K562 (cell line): ENCODE measurements at regions of chr2 and their contacts with region 1.

Region 1: GRCh38 chr2:64586883-64587481 is 62.9 kb downstream of the AFTPH start:
- DNase-seq: peak; percentile 23 to 52 (median 37)
- ATAC-seq: peak; percentile 74
- H3K4me3 ChIP-seq: no peak overlapping the region
- H3K27ac ChIP-seq: no peak overlapping the region
- H3K4me1 ChIP-seq: no peaks in the 10 kb centered on the region
- H3K27me3 ChIP-seq: no peaks in the 10 kb centered on the region
- CTCF ChIP-seq: peak; percentile 60 to 75 (median 71); a peak in 5 of 6 replicates
- EP300 ChIP-seq: no peak
- POLR2A ChIP-seq: no peak
- RAD21 ChIP-seq: peak; percentile 76 to 85

Region 2: GRCh38 chr2:64040161-64040560 is 546.8 kb before region 1 on chr2:
- CTCF ChIA-PET with region 1: no interaction called
- POLR2A ChIA-PET with region 1: no interaction called
- in situ Hi-C with region 1: no loop called
- intact Hi-C with region 1: loop called (anchors 10 kb)
- DNase-seq: no peak
- ATAC-seq: no peak
- H3K4me3 ChIP-seq: no peak overlapping the region
- H3K27ac ChIP-seq: no peak overlapping the region
- H3K4me1 ChIP-seq: no peaks in the 10 kb centered on the region; a peak in 1 of 5 replicates
- H3K27me3 ChIP-seq: no peaks in the 10 kb centered on the region
- CTCF ChIP-seq: no peak
- EP300 ChIP-seq: no peak
- POLR2A ChIP-seq: no peak
- RAD21 ChIP-seq: no peak

Region 3: GRCh38 chr2:64523666-64524603 is 63.0 kb before region 1 on chr2 and contains the start of gene AFTPH:
- CTCF ChIA-PET with region 1: no interaction called
- POLR2A ChIA-PET with region 1: no interaction called
- in situ Hi-C with region 1: no loop called
- intact Hi-C with region 1: loop called (anchors 2 kb)
- DNase-seq: peak; percentile 97 to 99 (median 98)
- ATAC-seq: peak; percentile 97
- H3K4me3 ChIP-seq: peak within 1 kb of the TSS; percentile 85
- H3K27ac ChIP-seq: peak within 1 kb of the TSS; percentile 74
- H3K4me1 ChIP-seq: peaks cover 0 to 5% of the 10 kb centered on the region in 2 experiments; a peak in 1 of 5 replicates
- H3K27me3 ChIP-seq: peaks cover 0 to 4% of the 10 kb centered on the region in 2 experiments; a peak in 3 of 5 replicates
- CTCF ChIP-seq: no peak
- EP300 ChIP-seq: no peak
- POLR2A ChIP-seq: peak; percentile 83
- RAD21 ChIP-seq: peak in 1 of 2 experiments; percentile 17; a peak in 1 of 4 replicates
- polyA plus RNA-seq, gene AFTPH: 8.0 to 9.3 TPM

Region 4: GRCh38 chr2:64865073-64865830 is 278.3 kb after region 1 on chr2:
- CTCF ChIA-PET with region 1: interaction called, 25 read pairs
- POLR2A ChIA-PET with region 1: interaction called, 4 read pairs
- in situ Hi-C with region 1: no loop called
- intact Hi-C with region 1: no loop called
- DNase-seq: peak; percentile 60 to 90 (median 86)
- ATAC-seq: peak; percentile 92
- H3K4me3 ChIP-seq: peak overlapping the region; percentile 14; the same call in 1 of the 2 replicates
- H3K27ac ChIP-seq: no peak overlapping the region
- H3K4me1 ChIP-seq: peaks cover 18 to 24% of the 10 kb centered on the region in 2 experiments
- H3K27me3 ChIP-seq: no peaks in the 10 kb centered on the region
- CTCF ChIP-seq: peak; percentile 56 to 66 (median 66); a peak in 5 of 6 replicates
- EP300 ChIP-seq: no peak
- POLR2A ChIP-seq: no peak
- RAD21 ChIP-seq: peak; percentile 78 to 97

Region 5: DNA sequence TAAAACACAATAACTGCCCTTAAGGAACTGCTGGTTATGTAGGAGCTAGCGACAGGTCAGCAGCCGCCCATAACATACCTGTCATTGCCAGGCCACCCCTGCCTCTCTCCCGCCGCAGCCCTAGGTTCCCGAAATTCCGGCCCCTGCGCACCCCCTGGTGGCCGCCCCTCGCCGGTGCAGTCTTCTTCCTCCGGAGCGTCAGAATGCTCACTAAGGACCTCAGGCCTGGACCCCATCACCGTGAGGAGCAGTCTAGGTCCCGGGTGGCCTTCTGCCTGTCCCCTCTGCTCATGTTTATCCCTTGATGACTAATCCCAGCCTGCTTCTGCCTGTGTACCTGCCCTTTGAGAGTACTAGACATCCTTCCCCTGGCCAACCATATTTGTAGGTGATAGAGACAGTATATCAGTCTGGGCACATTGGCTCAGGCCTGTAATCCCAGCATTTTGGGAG is 286.5 kb after region 1 on chr2:
- CTCF ChIA-PET with region 1: interaction called, 13 read pairs
- POLR2A ChIA-PET with region 1: no interaction called
- in situ Hi-C with region 1: no loop called
- intact Hi-C with region 1: loop called (anchors 1 kb)
- DNase-seq: peak; percentile 77 to 86 (median 84)
- ATAC-seq: peak; percentile 95
- H3K4me3 ChIP-seq: no peak overlapping the region
- H3K27ac ChIP-seq: no peak overlapping the region
- H3K4me1 ChIP-seq: peaks cover 7 to 14% of the 10 kb centered on the region in 2 experiments; a peak in 4 of 5 replicates
- H3K27me3 ChIP-seq: no peaks in the 10 kb centered on the region
- CTCF ChIP-seq: peak; percentile 89 to 96 (median 91)
- EP300 ChIP-seq: no peak
- POLR2A ChIP-seq: no peak
- RAD21 ChIP-seq: peak; percentile 82 to 94